Activated CD4-positive, alpha-beta T cell treated with anti-CD3 and anti-CD28 coated beads for 36 hours (primary cell): ENCODE measurements at regions of chr2 and their contacts with region 1.

Region 1: DNA sequence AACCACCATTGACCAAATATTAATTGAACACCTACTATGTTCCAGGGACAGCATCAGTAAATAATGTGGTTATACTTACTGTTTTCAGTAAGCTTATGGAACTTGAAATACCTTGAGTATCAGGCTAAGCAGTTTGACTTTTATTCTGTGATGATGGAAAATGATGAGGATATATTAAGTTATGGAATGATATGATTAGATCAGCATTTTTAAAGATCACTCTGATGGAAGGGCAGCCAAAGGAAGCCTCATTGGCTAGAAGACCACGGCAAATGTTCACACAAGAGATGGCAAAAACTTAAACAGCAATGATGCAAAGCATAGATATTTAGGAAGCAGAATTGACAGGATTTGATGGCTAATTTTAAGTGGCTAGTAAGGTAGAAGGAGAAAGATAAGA is 266.9 kb upstream of the DPP10 start:
- DNase-seq: no peak
- ATAC-seq: no peak
- H3K4me3 Mint-ChIP-seq: no peak overlapping the region
- H3K27ac Mint-ChIP-seq: no peak overlapping the region
- H3K4me1 Mint-ChIP-seq: no peaks in the 10 kb centered on the region
- H3K27me3 Mint-ChIP-seq: peaks cover 17% of the 10 kb centered on the region

Region 2: GRCh38 chr2:114160263-114160981 is 15.1 kb before region 1 on chr2:
- CTCF ChIA-PET with region 1: no interaction called
- POLR2A ChIA-PET with region 1: no interaction called
- intact Hi-C with region 1: loop called in 1 of 2 experiments (anchors 2 kb)
- DNase-seq: no peak
- ATAC-seq: no peak
- H3K4me3 Mint-ChIP-seq: no peak overlapping the region
- H3K27ac Mint-ChIP-seq: no peak overlapping the region
- H3K4me1 Mint-ChIP-seq: no peaks in the 10 kb centered on the region
- H3K27me3 Mint-ChIP-seq: peaks cover 7% of the 10 kb centered on the region